Activated CD8-positive, alpha-beta memory T cell treated with anti-CD3 and anti-CD28 coated beads, Interleukin-2, amount 10 ng/mL, durations not matched to agents 7 days and 5 days (primary cell): ENCODE measurements at regions of chr16 and their contacts with region 1.

Region 1: DNA sequence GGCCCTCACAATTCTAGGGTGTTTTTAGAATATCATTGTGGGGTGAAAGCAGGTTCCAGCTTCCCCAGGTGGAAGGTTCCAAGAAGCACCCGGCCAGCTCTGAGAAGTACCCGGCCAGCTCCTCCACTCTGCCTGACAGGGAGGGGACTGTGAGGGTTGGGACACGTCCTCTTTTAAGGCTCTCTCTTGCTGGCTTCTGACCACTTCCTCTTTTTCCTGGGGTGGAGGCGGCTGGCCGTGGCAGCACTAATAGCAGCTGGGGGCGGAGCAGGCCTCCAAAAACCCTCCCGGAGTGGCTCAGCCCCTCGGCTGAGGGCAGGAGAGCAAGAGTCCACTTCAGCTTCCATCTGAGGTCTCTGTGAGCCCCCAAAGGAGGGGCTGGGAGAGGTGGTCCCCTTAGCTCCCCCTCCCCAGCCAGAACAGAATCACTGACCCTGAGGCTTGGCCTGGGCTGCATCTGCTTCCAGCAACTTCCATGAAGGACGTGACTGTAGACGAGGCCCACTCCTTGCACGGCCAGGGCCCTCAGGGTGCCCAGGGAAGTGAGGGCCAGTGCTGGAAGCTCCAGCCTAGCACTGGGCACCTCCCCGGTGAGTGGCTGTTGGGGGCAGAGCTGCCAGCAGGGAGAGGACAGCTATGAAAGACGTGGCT is 26.7 kb upstream of the PLCG2 start:
- DNase-seq: no peak
- ATAC-seq: peak; percentile 17
- H3K4me3 Mint-ChIP-seq: no peak overlapping the region
- H3K27ac Mint-ChIP-seq: no peak overlapping the region
- H3K4me1 Mint-ChIP-seq: peaks cover 41% of the 10 kb centered on the region
- H3K27me3 Mint-ChIP-seq: no peaks in the 10 kb centered on the region

Region 2: DNA sequence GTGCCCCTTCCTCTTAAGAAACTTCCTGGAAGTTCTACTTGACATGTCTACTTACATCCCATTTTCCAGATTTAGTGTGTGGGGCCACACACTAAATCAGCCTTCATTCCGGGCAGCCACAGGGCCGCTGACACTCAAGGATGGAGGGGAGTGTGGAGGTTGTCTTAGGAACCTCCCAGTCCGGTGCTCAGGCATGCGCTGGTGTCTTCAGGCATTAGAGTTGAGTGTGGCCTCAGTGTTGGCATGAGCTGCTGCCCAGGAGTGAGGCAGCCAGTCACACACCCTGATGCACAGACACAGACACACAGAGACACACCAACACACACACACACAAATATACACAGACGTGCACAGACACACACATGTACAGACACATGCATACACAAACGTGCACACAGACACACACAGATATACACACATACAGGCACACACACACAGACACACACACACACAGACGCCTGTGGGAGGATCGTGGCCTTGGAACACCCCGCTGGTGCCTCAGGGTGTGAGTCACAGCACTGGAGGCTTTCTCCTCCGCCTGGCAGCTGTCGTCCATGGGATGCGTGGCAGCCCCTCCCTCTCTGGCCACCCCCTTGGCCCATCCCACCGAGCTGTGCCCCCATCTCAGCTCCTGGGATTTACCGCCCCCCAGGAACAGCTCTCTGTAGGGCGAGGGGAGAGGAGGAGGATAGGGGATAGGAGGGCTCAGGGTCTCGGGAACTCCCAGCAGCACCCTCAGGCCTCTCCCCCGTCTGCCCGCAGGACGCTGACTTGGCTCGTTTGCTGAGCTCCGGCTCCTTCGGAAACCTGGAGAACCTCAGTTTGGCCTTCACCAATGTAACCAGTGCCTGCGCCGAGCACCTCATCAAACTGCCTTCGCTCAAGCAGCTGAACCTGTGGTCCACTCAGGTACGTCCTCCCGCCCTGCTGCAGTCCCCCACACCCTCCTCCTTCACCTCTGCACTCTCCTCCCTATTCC is 48.9 kb before region 1 on chr16:
- CTCF ChIA-PET with region 1: no interaction called
- DNase-seq: no peak
- ATAC-seq: no peak
- H3K4me3 Mint-ChIP-seq: no peak overlapping the region
- H3K27ac Mint-ChIP-seq: no peak overlapping the region
- H3K4me1 Mint-ChIP-seq: peaks cover 3% of the 10 kb centered on the region
- H3K27me3 Mint-ChIP-seq: no peaks in the 10 kb centered on the region

Region 3: DNA sequence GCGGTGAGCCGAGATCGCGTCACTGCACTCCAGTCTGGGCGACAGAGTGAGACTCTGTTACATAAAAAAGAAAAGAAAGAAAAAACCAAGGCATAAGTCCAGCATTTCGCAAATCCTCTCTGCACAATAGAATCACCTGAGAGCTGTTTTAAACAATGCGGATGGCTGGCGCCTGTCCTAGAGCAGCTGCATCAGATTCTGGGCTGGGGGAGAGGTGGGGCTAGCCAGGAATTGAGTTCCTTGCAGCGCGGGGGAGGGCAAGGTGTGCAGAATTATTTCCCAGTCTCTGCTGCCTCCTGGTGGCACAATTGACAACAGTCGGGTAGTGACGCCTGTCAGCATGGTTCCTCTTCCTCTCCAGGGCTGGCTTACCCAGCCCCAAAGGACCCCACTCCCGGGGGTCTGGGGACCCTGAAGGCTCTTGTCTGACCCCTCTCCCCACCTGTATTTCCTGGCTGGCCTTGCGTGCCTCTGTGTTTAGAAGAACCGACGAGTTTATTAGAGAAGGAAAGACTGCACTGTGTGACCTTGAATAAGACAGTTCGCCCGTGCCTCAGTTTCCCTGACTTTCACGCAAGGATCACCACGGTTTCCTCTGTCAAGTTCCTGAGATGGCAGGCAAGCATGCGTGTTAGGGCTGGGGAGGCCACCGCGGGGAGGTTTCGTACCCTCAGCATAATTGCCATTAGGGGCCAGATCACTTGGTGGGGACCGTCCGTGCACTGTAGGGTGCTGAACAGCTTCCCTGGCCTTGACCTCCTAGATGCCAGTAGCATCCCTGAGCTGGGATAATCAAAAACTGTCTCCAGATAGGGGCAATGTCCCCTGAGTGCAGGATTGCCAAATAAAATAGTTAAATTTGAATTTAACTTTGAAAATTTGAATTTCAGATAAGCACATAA is 14.2 kb before region 1 on chr16:
- CTCF ChIA-PET with region 1: interaction called, 30 read pairs
- DNase-seq: peak; percentile 91
- ATAC-seq: peak; percentile 97
- H3K4me3 Mint-ChIP-seq: peak overlapping the region; percentile 57
- H3K27ac Mint-ChIP-seq: peak overlapping the region; percentile 37
- H3K4me1 Mint-ChIP-seq: peaks cover 21% of the 10 kb centered on the region
- H3K27me3 Mint-ChIP-seq: no peaks in the 10 kb centered on the region

Region 4: DNA sequence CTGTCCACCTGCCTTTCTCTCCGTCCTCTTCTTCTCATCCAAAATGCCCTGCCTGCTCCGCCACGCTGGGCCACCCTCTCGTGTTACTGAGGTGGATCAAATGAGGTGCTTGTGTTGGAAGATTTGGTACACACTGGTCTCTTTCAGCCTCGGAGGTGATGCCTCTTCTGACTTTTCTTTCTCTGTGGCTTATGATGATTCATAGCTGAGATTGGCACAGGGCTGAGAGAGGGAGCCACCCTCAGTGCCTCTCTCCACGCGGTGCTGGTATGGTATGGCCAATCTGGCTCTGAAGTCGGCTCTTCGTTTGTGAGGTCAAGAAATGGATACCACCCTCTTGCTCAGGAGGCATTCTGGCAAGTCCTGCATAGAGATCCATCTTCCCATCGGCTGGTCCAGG is 109.2 kb after region 1 on chr16:
- CTCF ChIA-PET with region 1: no interaction called
- DNase-seq: no peak
- ATAC-seq: peak; percentile 57
- H3K4me3 Mint-ChIP-seq: no peak overlapping the region
- H3K27ac Mint-ChIP-seq: peak overlapping the region; percentile 65
- H3K4me1 Mint-ChIP-seq: peaks cover 18% of the 10 kb centered on the region
- H3K27me3 Mint-ChIP-seq: no peaks in the 10 kb centered on the region